Mammary epithelial cell (primary cell): ENCODE measurements at regions of chr10 and their contacts with region 1.

Region 1: DNA sequence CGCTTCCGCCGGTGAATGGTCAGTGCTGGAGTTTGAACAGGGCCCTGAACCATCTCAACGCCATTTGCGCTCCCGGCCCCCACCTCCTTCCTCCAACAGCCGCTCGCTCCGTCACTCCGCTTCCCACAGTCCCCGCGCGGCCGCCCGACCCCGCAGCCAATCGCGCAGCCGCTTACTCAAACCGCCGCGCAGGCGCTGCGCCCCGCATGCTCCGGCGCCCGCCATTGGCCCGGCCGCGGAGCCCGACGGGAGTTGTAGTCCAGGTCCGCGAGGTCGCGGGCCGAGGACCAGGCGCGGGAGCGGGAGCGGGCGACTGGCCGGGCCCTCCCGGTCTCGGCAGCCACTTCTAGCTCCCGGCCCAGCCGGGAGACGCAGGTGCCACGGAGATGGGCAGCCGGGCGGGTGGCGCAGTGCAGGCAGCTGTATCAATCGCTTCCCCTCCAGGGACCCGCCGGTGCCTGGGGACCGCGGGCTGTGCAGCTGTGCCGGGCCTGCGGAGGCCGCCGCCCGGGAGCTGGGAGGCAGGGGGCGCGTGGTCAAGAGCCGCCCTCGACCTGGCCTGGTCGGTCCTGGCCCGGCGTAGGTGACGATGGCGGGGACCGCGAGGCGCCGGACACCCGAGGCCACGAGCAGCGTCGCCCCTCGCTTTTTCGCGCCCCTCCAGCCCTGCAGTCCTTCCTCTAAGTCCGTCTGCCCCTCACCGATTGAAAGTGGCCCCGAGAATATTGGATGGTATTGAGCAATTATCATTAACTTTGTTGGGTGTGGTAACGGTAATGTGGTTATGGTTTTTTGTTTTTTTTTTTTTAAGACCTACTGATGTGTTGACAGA is at the start of gene WAPL:
- DNase-seq: peak; percentile 92
- H3K4me3 ChIP-seq: peak within 1 kb of the TSS; percentile 84 to 96 (median 96)
- H3K27ac ChIP-seq: peak within 1 kb of the TSS; percentile 77
- H3K4me1 ChIP-seq: peaks cover 10% of the 10 kb centered on the region
- H3K27me3 ChIP-seq: no peaks in the 10 kb centered on the region
- CTCF ChIP-seq: no peak
- total RNA-seq, gene WAPL: 37.5 to 37.8 TPM

Region 2: DNA sequence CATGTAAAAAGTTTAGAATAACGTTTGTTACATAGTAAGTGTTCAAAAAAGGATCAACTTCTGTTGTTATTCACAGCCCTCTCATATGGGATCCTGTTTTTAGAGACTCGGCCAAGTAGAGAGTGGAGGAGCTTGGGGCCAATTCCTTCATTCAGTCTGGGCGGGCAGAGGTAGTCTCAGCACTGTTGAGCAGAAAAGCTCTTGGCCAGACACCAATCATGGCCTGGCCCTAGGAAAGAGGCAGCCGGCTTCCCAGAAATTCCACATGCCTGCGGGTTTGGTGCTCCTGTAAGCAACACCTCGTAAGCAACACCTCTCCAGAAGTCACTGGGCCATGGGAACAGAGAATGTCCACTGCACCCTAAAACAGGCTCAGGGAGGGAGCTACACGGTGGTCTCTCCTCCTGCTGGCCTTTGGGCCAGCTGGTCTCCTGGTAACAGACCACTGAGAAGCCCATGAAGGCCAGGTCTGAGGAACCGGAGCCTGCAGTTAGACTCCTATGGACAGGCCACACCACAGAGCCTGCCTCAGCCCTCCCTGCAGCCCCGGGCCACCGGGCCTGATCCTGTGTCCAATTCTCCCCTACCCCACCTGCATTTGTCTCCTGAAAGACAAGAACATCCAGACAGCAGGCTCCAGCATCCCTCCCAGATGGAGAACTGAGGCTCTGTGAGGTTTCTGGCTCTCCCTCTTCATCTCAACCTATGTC is 304.4 kb before region 1 on chr10:
- CTCF ChIA-PET with region 1: no interaction called
- dilution Hi-C with region 1: no loop called
- in situ Hi-C with region 1: no loop called
- intact Hi-C with region 1: no loop called
- DNase-seq: no peak
- H3K4me3 ChIP-seq: no peak overlapping the region
- H3K27ac ChIP-seq: no peak overlapping the region
- H3K4me1 ChIP-seq: no peaks in the 10 kb centered on the region
- H3K27me3 ChIP-seq: no peaks in the 10 kb centered on the region
- CTCF ChIP-seq: no peak

Region 3: DNA sequence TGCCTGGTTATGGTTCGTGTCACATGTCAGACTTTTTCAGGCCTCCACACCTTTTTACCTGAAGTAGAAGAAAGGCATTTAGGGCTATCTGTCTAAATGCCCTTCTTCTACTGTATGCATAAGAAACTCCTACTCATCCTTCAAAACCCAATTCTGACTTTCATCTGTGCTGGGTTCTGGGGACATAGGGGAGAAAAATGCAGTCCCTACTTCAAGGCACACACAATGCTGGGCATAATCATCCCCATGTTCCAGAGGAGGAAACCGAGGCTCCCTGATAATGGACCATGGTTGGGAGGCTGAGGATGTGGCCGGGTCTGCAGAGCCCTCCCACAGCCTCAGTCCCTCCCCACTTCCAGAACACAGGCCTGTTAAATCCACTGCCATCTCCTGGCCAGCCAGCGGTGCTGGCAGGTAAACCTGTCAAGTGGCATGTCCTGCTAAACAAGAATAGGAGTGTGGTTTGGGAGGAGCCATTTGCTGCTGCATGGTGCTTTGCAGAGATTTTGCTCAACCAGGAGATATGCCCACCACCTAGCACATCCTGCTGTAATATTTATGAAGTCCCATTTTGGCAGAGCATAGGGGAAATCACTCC is 187.3 kb before region 1 on chr10:
- CTCF ChIA-PET with region 1: no interaction called
- dilution Hi-C with region 1: no loop called
- in situ Hi-C with region 1: no loop called
- intact Hi-C with region 1: no loop called
- DNase-seq: no peak
- H3K4me3 ChIP-seq: no peak overlapping the region
- H3K27ac ChIP-seq: no peak overlapping the region
- H3K4me1 ChIP-seq: no peaks in the 10 kb centered on the region
- H3K27me3 ChIP-seq: no peaks in the 10 kb centered on the region
- CTCF ChIP-seq: no peak

Region 4: DNA sequence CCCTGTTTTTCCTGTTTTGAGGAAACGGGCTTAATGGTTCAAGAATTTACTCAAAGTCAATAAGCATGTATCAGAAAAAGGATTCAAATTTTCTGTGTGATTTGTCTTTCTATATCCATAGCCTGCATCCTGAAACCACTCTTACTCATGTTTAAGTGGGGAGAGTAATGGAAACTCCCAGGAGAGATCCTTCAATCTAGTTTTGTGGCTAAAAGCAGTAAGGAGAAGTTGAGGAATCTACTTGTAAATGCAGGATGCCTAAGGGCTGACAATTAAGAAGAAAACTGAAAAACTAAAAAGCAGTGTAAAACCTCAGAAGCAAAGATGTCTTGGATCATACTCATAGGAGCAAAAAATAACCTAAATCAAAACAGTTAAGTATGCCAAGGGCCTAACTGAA is 87.2 kb before region 1 on chr10:
- CTCF ChIA-PET with region 1: no interaction called
- dilution Hi-C with region 1: no loop called
- in situ Hi-C with region 1: no loop called
- intact Hi-C with region 1: no loop called
- DNase-seq: no peak
- H3K4me3 ChIP-seq: no peak overlapping the region
- H3K27ac ChIP-seq: no peak overlapping the region
- H3K4me1 ChIP-seq: no peaks in the 10 kb centered on the region
- H3K27me3 ChIP-seq: no peaks in the 10 kb centered on the region
- CTCF ChIP-seq: no peak

Region 5: DNA sequence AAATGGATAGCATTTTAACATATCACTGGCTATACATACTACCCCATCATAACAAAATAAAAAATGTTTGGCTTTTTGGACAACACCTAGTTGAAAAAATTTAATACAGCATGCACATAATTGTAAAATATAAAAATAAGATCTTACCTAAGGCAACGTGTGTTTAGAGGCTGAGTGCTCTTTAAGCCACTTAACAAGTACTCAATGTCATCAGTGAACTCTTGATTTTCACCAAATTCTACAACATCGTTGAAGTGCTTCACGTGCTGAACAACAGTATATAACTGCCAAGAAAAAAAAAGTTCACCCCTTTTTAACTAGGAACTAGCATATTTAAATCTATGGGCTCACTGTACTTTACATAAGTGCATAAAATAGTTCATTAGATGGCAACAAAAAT is 49.8 kb before region 1 on chr10:
- CTCF ChIA-PET with region 1: no interaction called
- dilution Hi-C with region 1: loop called (anchors 10 kb)
- in situ Hi-C with region 1: no loop called
- intact Hi-C with region 1: no loop called
- DNase-seq: no peak
- H3K4me3 ChIP-seq: no peak overlapping the region
- H3K27ac ChIP-seq: no peak overlapping the region
- H3K4me1 ChIP-seq: no peaks in the 10 kb centered on the region
- H3K27me3 ChIP-seq: no peaks in the 10 kb centered on the region
- CTCF ChIP-seq: no peak

Region 6: DNA sequence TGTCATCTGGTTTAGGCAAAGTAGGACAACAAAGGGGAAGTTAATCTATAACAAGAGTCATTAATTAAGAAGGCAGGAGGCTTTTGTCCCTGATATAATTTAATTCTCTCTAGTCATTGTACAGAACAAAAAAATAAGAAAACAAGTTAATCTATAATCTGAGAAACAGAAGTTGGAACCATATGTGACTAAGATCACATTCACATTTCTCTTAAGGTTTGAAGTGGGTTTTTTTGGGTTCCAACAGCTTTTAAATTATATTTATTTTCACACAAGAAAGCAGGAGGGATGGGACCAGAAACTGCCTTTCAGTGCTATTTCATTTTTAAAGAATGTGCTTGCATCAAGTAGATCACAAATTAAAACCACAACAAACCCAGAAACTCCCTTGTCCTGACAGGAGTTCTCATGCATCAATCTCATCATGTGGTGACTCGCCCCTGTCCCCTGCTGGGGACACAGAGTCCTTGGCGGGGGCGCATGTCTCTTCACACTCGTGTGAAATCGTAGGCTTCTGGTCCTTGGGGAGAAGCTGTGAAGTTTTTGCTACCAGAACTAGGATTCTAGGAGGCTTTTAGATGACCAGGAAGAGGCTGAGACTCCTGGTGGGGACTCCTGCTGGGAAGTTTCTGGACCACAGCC is 122.4 kb after region 1 on chr10:
- CTCF ChIA-PET with region 1: no interaction called
- dilution Hi-C with region 1: no loop called
- in situ Hi-C with region 1: no loop called
- intact Hi-C with region 1: loop called (anchors 5 kb)
- DNase-seq: peak; percentile 78
- H3K4me3 ChIP-seq: no peak overlapping the region
- H3K27ac ChIP-seq: no peak overlapping the region
- H3K4me1 ChIP-seq: peaks cover 24% of the 10 kb centered on the region
- H3K27me3 ChIP-seq: no peaks in the 10 kb centered on the region
- CTCF ChIP-seq: peak; percentile 21 to 49